Caco-2 (cell line): ENCODE measurements at regions of chr5 and their contacts with region 1.

Region 1: GRCh38 chr5:147576646-147577535 is 67.0 kb upstream of the DPYSL3 start:
- DNase-seq: peak; percentile 47 to 77
- H3K4me3 ChIP-seq: no peak overlapping the region
- H3K4me3 Mint-ChIP-seq: no peak overlapping the region
- H3K27ac Mint-ChIP-seq: no peak overlapping the region
- H3K4me1 ChIP-seq: 0 out of 2 replicates have a peak, but pooled peaks cover 4% of the 10 kb centered on the region
- H3K4me1 Mint-ChIP-seq: no peaks in the 10 kb centered on the region
- H3K27me3 ChIP-seq: no peaks in the 10 kb centered on the region
- H3K27me3 Mint-ChIP-seq: no peaks in the 10 kb centered on the region
- CTCF ChIP-seq: peak; percentile 83 to 89

Region 2: GRCh38 chr5:146967646-146968045 is 609.2 kb before region 1 on chr5:
- CTCF ChIA-PET with region 1: no interaction called
- POLR2A ChIA-PET with region 1: no interaction called
- intact Hi-C with region 1: no loop called
- DNase-seq: no peak
- H3K4me3 ChIP-seq: no peak overlapping the region
- H3K4me3 Mint-ChIP-seq: no peak overlapping the region
- H3K27ac Mint-ChIP-seq: no peak overlapping the region
- H3K4me1 ChIP-seq: no peaks in the 10 kb centered on the region
- H3K4me1 Mint-ChIP-seq: peaks cover 11% of the 10 kb centered on the region
- H3K27me3 ChIP-seq: no peaks in the 10 kb centered on the region
- H3K27me3 Mint-ChIP-seq: no peaks in the 10 kb centered on the region
- CTCF ChIP-seq: no peak

Region 3: GRCh38 chr5:147223948-147224791 is 352.7 kb before region 1 on chr5:
- CTCF ChIA-PET with region 1: interaction called, 19 read pairs
- POLR2A ChIA-PET with region 1: no interaction called
- intact Hi-C with region 1: loop called (anchors 1 kb)
- DNase-seq: peak; percentile 42 to 67
- H3K4me3 ChIP-seq: no peak overlapping the region
- H3K4me3 Mint-ChIP-seq: no peak overlapping the region
- H3K27ac Mint-ChIP-seq: no peak overlapping the region
- H3K4me1 ChIP-seq: no peaks in the 10 kb centered on the region
- H3K4me1 Mint-ChIP-seq: no peaks in the 10 kb centered on the region
- H3K27me3 ChIP-seq: no peaks in the 10 kb centered on the region
- H3K27me3 Mint-ChIP-seq: no peaks in the 10 kb centered on the region
- CTCF ChIP-seq: peak; percentile 70 to 78

Region 4: DNA sequence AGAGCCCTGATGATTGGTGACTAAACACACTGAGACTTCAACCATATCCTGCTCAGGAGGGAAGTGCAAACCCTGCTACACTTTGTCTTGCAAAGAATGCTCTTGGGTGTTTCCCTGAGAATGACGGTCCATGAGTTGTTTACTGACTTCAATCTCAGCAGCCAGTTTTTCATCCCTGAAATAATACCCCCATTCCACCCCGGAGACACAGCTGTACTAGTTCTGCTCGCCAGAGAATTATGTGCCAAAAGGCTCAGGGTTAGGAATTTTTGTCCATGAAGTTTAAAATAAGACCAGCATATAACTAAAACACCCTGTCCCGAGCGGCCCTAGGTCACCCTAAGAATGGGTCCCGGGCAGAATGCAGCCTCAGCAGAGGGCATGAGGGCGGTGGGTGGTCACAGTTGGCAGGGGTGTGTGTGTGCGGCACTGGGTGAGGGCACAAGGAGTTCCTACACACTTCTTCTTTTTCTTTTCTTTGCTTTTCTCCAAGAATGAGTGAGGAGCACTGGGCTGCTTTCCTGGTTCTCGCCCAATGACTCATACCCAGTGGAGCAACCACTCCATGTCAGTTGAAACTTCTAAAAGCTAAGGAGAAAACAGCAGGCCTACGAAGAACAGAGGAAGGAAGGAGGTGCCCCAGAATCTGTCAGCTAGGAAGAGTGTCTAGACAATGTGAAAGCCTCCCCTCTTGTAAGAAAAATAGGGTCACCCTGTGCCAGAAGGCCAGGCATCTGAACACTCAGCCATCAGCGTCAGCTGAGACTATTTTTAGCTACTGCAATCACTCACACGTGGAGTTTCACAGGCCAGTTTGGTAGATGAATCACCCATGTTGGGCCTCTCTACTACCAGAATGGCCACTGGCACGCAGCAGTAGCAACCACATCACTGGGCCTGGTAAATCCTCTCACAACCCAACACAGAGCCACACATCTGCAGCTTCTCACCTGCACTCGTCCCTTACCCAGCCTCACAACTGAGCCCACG is 172.9 kb before region 1 on chr5:
- CTCF ChIA-PET with region 1: no interaction called
- POLR2A ChIA-PET with region 1: no interaction called
- intact Hi-C with region 1: loop called (anchors 5 kb)
- DNase-seq: no peak
- H3K4me3 ChIP-seq: no peak overlapping the region
- H3K4me3 Mint-ChIP-seq: no peak overlapping the region
- H3K27ac Mint-ChIP-seq: peak overlapping the region; percentile 74
- H3K4me1 ChIP-seq: peaks cover 83% of the 10 kb centered on the region
- H3K4me1 Mint-ChIP-seq: peaks cover 43% of the 10 kb centered on the region
- H3K27me3 ChIP-seq: no peaks in the 10 kb centered on the region
- H3K27me3 Mint-ChIP-seq: no peaks in the 10 kb centered on the region
- CTCF ChIP-seq: no peak

Region 5: GRCh38 chr5:147453875-147454814 is 122.7 kb before region 1 on chr5:
- CTCF ChIA-PET with region 1: interaction called, 30 read pairs
- POLR2A ChIA-PET with region 1: interaction called, 6 read pairs
- intact Hi-C with region 1: loop called (anchors 1 kb)
- DNase-seq: peak; percentile 88 to 94
- H3K4me3 ChIP-seq: peak overlapping the region; percentile 92
- H3K4me3 Mint-ChIP-seq: peak overlapping the region; percentile 85
- H3K27ac Mint-ChIP-seq: peak overlapping the region; percentile 73
- H3K4me1 ChIP-seq: peaks cover 29% of the 10 kb centered on the region
- H3K4me1 Mint-ChIP-seq: peaks cover 23% of the 10 kb centered on the region
- H3K27me3 ChIP-seq: no peaks in the 10 kb centered on the region
- H3K27me3 Mint-ChIP-seq: no peaks in the 10 kb centered on the region
- CTCF ChIP-seq: peak; percentile 93 to 95

Region 6: GRCh38 chr5:147743678-147744374 is 166.9 kb after region 1 on chr5:
- CTCF ChIA-PET with region 1: no interaction called
- POLR2A ChIA-PET with region 1: no interaction called
- intact Hi-C with region 1: no loop called
- DNase-seq: no peak
- H3K4me3 ChIP-seq: no peak overlapping the region
- H3K4me3 Mint-ChIP-seq: no peak overlapping the region
- H3K27ac Mint-ChIP-seq: no peak overlapping the region
- H3K4me1 ChIP-seq: peaks cover 12% of the 10 kb centered on the region
- H3K4me1 Mint-ChIP-seq: peaks cover 9% of the 10 kb centered on the region
- H3K27me3 ChIP-seq: no peaks in the 10 kb centered on the region; the same call in 1 of the 2 replicates
- H3K27me3 Mint-ChIP-seq: no peaks in the 10 kb centered on the region
- CTCF ChIP-seq: no peak